CD4-positive, alpha-beta memory T cell (primary cell): ENCODE measurements at regions of chr11 and their contacts with region 1.

Region 1: DNA sequence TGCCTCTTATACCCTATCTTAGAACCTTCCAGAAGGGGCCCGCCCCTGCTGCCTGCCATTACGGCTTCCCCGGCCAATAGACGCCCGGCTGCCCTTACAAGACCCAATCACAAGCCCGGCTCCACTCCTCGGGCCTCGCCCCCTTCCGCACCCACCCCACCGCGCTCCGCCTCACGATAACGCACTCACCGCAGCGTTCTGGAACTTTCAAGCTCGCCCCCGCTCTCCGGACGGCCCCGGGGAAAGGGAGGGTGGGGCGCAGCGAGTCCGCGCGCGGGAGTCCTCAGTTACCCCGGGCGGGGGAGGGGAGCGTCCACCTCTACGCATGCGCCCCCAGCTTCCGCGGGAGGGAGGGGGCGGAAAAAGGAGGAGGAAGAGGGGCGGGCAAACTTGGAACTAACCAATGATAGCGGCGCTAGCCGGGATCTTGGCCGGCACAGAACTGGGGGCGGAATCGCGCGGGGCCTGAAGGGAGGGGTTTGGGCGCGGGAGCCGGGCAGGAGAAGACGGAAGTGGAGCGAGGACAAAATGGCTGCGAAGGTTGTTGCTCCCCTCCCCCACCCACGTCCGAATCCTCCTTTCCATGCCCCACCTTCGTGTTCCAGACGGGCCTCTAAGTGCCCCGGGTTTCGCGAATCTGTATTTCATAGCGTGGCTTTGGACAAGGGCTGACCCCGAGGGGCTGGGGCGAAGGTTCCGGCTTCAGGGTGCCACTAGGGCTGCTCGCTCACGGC is 389 bp upstream of the HSPA8 start:
- DNase-seq: peak; percentile 100
- H3K4me3 ChIP-seq: peak overlapping the region; percentile 92 to 95
- H3K4me3 Mint-ChIP-seq: peak overlapping the region; percentile 97 to 100 (median 99)
- H3K27ac ChIP-seq: peak overlapping the region; percentile 99
- H3K27ac Mint-ChIP-seq: peak overlapping the region; percentile 95 to 99 (median 97)
- H3K4me1 ChIP-seq: peaks cover 61% of the 10 kb centered on the region
- H3K4me1 Mint-ChIP-seq: peaks cover 40 to 83% (median 52%) of the 10 kb centered on the region in 4 donors
- H3K27me3 ChIP-seq: no peaks in the 10 kb centered on the region
- H3K27me3 Mint-ChIP-seq: no peaks in the 10 kb centered on the region

Region 2: DNA sequence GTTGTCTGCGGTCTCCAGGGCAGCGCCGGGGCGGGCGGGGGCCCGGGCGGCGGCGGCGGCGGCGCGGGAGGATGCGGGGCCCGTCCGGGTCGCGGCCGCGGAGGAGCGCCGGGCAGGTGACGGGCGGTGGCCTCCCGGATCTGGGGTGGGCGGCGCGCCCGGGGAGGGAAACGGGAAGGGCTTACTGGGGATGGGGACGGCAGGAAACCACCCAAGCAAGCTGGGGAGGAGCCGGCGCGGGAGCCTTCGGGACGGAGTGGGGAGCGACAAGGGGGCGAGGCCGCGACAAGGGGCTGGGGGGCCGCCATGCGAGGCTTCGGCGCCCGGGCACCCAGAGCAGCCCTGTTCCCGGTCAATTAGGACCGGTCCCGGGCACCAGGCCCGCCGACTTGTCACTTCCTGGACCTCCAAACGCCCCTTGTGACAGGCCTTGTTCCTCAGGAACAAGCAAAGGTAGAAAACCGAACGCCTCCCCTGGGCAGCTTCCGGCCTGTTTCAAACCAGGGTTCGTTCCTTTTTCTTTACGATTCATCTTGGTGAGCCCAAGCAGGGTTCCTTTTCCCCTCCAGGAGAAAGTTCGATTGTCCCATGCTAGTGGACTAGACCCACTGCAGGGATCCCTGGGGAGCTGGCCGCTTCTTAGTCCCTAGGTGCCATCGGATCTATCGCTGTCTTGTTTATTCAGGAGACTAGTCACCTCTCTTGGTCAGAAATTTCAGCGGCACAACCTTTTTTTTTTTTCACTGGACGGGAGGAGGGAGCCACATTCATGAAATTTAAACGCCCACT is 179.3 kb before region 1 on chr11:
- CTCF ChIA-PET with region 1: no interaction called
- POLR2A ChIA-PET with region 1: interaction called, 13 read pairs
- intact Hi-C with region 1: loop called (anchors 2 kb)
- DNase-seq: peak; percentile 43 to 53 (median 52)
- H3K4me3 ChIP-seq: peak overlapping the region; percentile 42 to 56
- H3K4me3 Mint-ChIP-seq: peak overlapping the region; percentile 83 to 91 (median 88)
- H3K27ac ChIP-seq: peak overlapping the region; percentile 63
- H3K27ac Mint-ChIP-seq: peak overlapping the region; percentile 64 to 93 (median 79)
- H3K4me1 ChIP-seq: peaks cover 20% of the 10 kb centered on the region
- H3K4me1 Mint-ChIP-seq: peaks cover 20 to 26% (median 24%) of the 10 kb centered on the region in 4 donors
- H3K27me3 ChIP-seq: no peaks in the 10 kb centered on the region
- H3K27me3 Mint-ChIP-seq: no peaks in the 10 kb centered on the region

Region 3: GRCh38 chr11:123046473-123047259 is 15.7 kb before region 1 on chr11:
- CTCF ChIA-PET with region 1: interaction called, 41 read pairs
- POLR2A ChIA-PET with region 1: interaction called, 424 read pairs
- intact Hi-C with region 1: no loop called
- DNase-seq: no peak
- H3K4me3 ChIP-seq: no peak overlapping the region
- H3K4me3 Mint-ChIP-seq: no peak overlapping the region
- H3K27ac ChIP-seq: no peak overlapping the region
- H3K27ac Mint-ChIP-seq: peak overlapping the region in 1 of 7 donors; percentile 19
- H3K4me1 ChIP-seq: no peaks in the 10 kb centered on the region
- H3K4me1 Mint-ChIP-seq: no peaks in the 10 kb centered on the region
- H3K27me3 ChIP-seq: no peaks in the 10 kb centered on the region
- H3K27me3 Mint-ChIP-seq: no peaks in the 10 kb centered on the region

Region 4: DNA sequence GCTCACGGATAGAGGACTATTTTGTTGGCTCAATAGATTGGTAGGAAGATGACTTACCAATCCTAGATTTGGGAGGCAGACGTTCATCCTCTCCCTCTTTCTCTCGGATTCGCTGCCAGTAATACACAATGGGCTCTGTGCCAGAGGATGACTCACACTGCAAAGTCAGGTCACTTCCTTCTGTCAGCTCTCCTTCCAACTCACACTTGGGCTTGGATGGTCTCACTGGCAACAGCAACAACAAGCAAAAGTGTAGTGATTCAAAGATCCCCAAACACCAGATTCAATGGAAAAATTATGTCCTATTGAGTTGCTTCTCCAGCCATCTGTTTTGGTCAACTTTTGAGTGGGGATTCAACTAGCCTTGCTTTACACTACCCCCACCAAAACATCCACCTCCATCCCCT is 21.3 kb after region 1 on chr11:
- CTCF ChIA-PET with region 1: interaction called, 184 read pairs
- POLR2A ChIA-PET with region 1: interaction called, 891 read pairs
- intact Hi-C with region 1: loop called (anchors 1 kb)
- DNase-seq: peak; percentile 56 to 91 (median 72)
- H3K4me3 ChIP-seq: peak overlapping the region in 1 of 2 donors; percentile 3
- H3K4me3 Mint-ChIP-seq: peak overlapping the region; percentile 73 to 88 (median 78)
- H3K27ac ChIP-seq: peak overlapping the region; percentile 45
- H3K27ac Mint-ChIP-seq: peak overlapping the region; percentile 93 to 96 (median 93)
- H3K4me1 ChIP-seq: peaks cover 57% of the 10 kb centered on the region
- H3K4me1 Mint-ChIP-seq: peaks cover 31 to 66% (median 50%) of the 10 kb centered on the region in 4 donors
- H3K27me3 ChIP-seq: no peaks in the 10 kb centered on the region
- H3K27me3 Mint-ChIP-seq: no peaks in the 10 kb centered on the region

Region 5: DNA sequence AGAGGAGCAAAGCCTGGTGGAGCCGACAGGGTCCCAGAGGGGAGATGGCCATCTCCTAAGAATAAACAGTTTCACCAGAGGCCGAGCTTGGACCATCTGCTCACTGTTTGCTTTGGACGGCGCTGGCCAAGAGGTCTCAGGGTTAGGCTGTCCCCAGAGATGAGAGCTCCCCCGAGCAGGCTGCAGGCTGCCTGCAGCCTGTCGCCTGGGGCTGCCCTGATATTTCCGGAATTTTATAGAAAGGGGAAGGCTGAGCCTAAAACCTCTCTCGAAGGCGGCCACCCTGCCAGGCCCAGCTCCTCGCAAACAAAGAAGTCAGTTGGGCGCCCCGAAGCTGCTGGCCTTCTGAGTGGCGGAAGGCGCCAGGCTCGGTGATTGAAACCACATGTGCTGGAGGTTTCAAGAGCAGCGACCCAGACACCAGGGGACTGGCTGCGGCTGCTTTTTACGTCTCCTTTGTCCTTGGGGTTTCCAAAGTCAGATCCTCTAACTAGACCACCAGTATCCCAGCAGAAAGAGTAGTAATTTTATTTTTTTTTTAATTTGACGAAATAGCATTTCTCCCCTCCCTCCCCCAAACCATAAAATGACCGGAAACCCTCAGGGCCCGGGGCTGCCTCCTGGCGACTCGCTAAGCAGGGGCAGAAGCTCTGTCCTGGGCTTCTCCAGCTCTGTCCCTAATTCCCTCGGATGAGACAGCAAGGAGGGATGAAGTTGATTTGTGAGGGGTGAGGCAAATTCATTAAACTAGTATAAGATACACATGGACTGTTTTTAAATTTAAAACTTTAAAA is 75.3 kb after region 1 on chr11:
- CTCF ChIA-PET with region 1: no interaction called
- POLR2A ChIA-PET with region 1: no interaction called
- intact Hi-C with region 1: no loop called
- DNase-seq: no peak
- H3K4me3 ChIP-seq: no peak overlapping the region
- H3K4me3 Mint-ChIP-seq: no peak overlapping the region
- H3K27ac ChIP-seq: no peak overlapping the region
- H3K27ac Mint-ChIP-seq: no peak overlapping the region
- H3K4me1 ChIP-seq: no peaks in the 10 kb centered on the region
- H3K4me1 Mint-ChIP-seq: no peaks in the 10 kb centered on the region
- H3K27me3 ChIP-seq: no peaks in the 10 kb centered on the region
- H3K27me3 Mint-ChIP-seq: peaks cover 1 to 4% of the 10 kb centered on the region in 2 donors

Region 6: GRCh38 chr11:123253911-123254310 is 191.6 kb after region 1 on chr11:
- CTCF ChIA-PET with region 1: no interaction called
- POLR2A ChIA-PET with region 1: no interaction called
- intact Hi-C with region 1: no loop called
- DNase-seq: no peak
- H3K4me3 ChIP-seq: no peak overlapping the region
- H3K4me3 Mint-ChIP-seq: no peak overlapping the region
- H3K27ac ChIP-seq: no peak overlapping the region
- H3K27ac Mint-ChIP-seq: peak overlapping the region in 1 of 7 donors; percentile 24
- H3K4me1 ChIP-seq: no peaks in the 10 kb centered on the region
- H3K4me1 Mint-ChIP-seq: no peaks in the 10 kb centered on the region
- H3K27me3 ChIP-seq: no peaks in the 10 kb centered on the region
- H3K27me3 Mint-ChIP-seq: peaks cover 17 to 18% of the 10 kb centered on the region in 2 donors

Region 7: DNA sequence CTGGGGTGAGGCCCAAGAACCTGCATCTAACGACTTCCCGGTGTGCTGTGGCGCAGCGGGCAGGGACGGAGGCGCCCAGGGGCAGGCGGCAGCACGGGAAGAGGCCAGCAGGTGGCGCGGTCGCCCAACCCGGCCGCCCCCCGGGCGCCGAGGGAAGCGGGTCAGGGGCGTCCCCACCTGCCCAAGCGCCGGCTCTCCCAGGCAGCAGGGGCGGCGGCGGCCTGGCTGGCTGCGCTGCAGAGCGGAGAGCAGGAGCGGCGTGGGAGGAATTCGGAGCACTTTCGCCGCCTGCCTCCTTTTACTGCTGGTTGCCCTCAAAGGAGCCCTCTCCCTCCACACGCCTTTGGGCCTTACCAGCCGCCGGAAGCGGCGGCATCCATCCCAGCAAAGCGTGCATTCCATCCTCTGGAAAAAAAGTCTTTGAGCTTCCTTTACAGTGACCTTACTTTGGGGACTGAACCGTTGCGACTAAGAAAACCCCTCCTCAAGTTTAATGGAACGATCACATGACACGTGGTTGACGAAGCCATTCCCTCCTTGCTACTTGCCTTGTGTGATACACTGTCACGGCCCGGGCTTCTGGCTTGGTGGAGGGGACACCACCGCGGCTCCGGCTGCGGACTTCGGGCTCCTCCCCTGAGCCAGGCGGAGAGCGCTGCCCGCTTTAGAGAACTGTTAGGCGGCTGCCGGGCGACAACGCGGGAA is 239.5 kb after region 1 on chr11:
- CTCF ChIA-PET with region 1: interaction called, 3 read pairs
- POLR2A ChIA-PET with region 1: interaction called, 8 read pairs
- intact Hi-C with region 1: loop called (anchors 5 kb)
- DNase-seq: peak; percentile 58 to 72 (median 64)
- H3K4me3 ChIP-seq: peak overlapping the region; percentile 38 to 42
- H3K4me3 Mint-ChIP-seq: peak overlapping the region; percentile 72 to 84 (median 76)
- H3K27ac ChIP-seq: peak overlapping the region; percentile 51
- H3K27ac Mint-ChIP-seq: peak overlapping the region; percentile 75 to 89 (median 83)
- H3K4me1 ChIP-seq: peaks cover 46% of the 10 kb centered on the region
- H3K4me1 Mint-ChIP-seq: peaks cover 27 to 47% (median 37%) of the 10 kb centered on the region in 4 donors
- H3K27me3 ChIP-seq: no peaks in the 10 kb centered on the region
- H3K27me3 Mint-ChIP-seq: no peaks in the 10 kb centered on the region

Region 8: GRCh38 chr11:123429913-123430720 is 367.8 kb after region 1 on chr11 and contains the start of gene GRAMD1B:
- CTCF ChIA-PET with region 1: interaction called, 3 read pairs
- POLR2A ChIA-PET with region 1: interaction called, 3 read pairs
- intact Hi-C with region 1: loop called (anchors 5 kb)
- DNase-seq: peak; percentile 79 to 84 (median 81)
- H3K4me3 ChIP-seq: peak within 1 kb of the TSS; percentile 69 to 84
- H3K4me3 Mint-ChIP-seq: peak within 1 kb of the TSS; percentile 90 to 98 (median 92)
- H3K27ac ChIP-seq: peak within 1 kb of the TSS; percentile 67
- H3K27ac Mint-ChIP-seq: peak within 1 kb of the TSS; percentile 86 to 96 (median 92)
- H3K4me1 ChIP-seq: peaks cover 24% of the 10 kb centered on the region
- H3K4me1 Mint-ChIP-seq: peaks cover 20 to 55% (median 35%) of the 10 kb centered on the region in 4 donors
- H3K27me3 ChIP-seq: no peaks in the 10 kb centered on the region
- H3K27me3 Mint-ChIP-seq: peaks cover 0 to 2% of the 10 kb centered on the region in 2 donors
- total RNA-seq, gene GRAMD1B: 19.5 to 26.0 TPM